ENCODE measurements at regions of chr6 and their contacts with region 1.

Region 1: DNA sequence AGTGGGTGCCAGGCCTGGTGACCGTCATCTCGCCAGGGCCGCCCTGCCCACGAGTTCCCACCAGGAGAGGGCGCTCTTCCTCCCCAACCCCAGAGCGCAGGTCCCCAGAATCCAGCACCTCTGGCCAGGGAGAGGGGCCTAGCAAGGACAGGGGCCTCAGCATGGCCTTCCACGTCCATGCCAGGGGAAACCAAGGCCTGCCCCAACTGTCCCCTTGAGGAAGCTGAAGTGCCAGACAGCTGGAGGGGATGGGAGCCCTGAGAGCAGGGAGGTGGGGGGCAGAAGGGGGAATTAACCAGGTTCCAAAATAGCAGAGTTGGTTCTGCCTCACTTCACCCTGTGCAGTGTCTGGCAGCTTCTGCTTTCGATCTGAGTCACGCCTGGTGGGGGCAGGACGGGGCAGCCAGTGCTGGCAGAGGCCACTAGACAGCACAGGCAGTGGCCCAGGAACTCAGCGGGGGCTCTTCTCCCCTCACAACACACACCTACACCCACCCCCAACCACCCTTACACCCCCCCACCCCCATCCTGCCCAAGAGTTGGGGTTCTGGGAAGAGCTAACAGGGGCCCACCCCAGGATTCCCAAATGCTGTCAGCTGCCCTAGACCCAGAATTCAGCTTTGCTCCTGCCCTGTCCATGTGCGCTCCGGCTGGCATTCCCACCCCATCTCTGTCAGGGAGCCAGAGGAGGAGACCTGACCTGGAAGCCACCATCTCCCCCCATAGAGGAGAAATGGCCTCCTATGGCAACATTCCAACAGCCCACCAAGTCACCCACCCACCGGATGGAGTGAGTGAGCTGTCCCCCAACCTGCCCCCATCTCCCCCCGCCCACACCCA is 29.2 kb downstream of the TFEB start:
- DNase-seq: peak; percentile 67
- H3K4me3 Mint-ChIP-seq: no peak overlapping the region
- H3K27ac Mint-ChIP-seq: peak overlapping the region; percentile 89
- H3K4me1 Mint-ChIP-seq: peaks cover 36% of the 10 kb centered on the region
- H3K27me3 Mint-ChIP-seq: peaks cover 2% of the 10 kb centered on the region

Region 2: DNA sequence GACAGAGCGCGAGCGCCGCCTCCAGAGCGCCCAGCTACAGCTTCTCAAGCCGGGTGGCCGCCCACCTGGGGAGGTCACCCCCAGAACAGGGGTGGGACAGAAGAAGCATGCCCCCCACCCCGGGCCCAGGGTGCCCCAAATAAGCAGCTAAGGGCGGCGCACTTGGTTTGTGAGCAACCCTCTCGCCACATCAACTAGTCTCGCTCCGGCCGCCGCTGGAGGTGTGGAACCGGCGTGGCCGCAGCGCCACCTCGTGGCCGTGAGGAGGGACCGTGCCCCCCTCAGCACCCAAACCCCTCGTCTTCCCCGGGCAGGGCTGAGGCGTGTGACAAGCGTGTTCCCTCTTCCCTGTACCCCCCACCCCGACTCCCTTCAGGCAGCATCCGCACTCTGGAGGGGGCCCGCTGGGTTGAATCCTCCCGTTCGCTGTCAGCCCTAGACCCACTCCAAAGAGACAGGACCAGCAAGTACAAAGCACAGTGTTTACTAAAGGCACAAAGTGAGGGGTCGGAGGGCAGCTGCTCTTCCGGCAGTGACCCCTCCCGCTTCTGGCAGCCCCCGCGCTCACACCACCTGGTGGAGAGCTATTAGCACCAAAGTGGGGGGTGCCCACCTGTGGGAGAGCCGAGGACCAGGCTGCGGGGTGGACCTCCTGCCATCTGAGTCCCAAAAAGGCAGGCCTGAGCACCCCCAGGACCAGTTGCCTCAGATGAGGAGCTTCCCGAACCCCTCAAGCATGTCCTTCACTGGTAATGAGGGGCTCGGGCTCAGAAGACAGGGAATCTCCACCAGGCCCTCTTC is 22.5 kb before region 1 on chr6:
- CTCF ChIA-PET with region 1: interaction called, 17 read pairs
- POLR2A ChIA-PET with region 1: no interaction called
- DNase-seq: peak; percentile 77
- H3K4me3 Mint-ChIP-seq: peak overlapping the region; percentile 40
- H3K27ac Mint-ChIP-seq: peak overlapping the region; percentile 80
- H3K4me1 Mint-ChIP-seq: peaks cover 12% of the 10 kb centered on the region
- H3K27me3 Mint-ChIP-seq: no peaks in the 10 kb centered on the region

Region 3: DNA sequence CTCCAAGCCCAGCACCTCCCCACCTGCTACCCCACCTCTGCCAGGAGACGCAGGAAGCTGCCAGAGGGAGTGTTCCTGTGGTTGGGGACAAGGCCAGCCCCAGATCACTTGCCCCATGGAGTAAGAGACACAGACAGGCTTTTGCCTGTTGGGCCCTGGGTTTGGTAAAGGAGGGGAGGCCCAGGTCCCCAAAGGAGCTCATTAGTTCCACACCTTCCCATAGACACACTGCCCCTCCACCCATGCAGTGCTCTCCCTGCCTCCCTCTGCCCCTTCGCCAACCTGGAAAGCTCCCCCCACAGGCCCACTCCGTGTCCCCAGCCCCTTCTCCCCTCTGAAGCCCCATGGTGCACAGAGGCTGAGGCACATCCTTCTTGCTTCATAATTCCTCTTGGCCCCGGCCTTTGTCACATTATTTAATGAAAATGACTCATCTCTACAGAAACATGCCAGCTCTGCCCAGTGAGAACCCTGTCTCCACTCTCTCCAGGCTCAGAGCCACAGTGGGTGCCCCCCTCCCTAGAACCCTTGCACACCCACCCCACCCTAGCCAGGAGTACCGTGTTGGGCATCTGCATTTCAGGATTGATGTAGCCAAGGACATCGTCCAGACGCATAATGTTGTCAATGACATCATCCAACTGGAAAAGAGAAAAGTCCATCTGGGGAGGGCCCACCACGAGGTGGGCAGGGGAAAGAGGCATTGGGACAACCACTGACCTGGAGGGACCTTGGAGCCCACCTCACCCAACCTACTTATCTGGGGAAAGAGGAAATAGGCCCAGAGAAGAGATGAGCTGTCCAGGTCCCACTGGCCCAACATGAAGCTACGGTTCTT is 16.8 kb before region 1 on chr6:
- CTCF ChIA-PET with region 1: interaction called, 17 read pairs
- POLR2A ChIA-PET with region 1: no interaction called
- DNase-seq: no peak
- H3K4me3 Mint-ChIP-seq: no peak overlapping the region
- H3K27ac Mint-ChIP-seq: no peak overlapping the region
- H3K4me1 Mint-ChIP-seq: peaks cover 3% of the 10 kb centered on the region
- H3K27me3 Mint-ChIP-seq: no peaks in the 10 kb centered on the region

Region 4: GRCh38 chr6:41716516-41717391 is 10.5 kb after region 1 on chr6:
- CTCF ChIA-PET with region 1: interaction called, 13 read pairs
- POLR2A ChIA-PET with region 1: no interaction called
- DNase-seq: no peak
- H3K4me3 Mint-ChIP-seq: no peak overlapping the region
- H3K27ac Mint-ChIP-seq: no peak overlapping the region
- H3K4me1 Mint-ChIP-seq: peaks cover 10% of the 10 kb centered on the region
- H3K27me3 Mint-ChIP-seq: no peaks in the 10 kb centered on the region

Region 5: GRCh38 chr6:41846666-41847237 is 140.5 kb after region 1 on chr6:
- CTCF ChIA-PET with region 1: no interaction called
- POLR2A ChIA-PET with region 1: no interaction called
- DNase-seq: peak; percentile 69
- H3K4me3 Mint-ChIP-seq: no peak overlapping the region
- H3K27ac Mint-ChIP-seq: peak overlapping the region; percentile 16
- H3K4me1 Mint-ChIP-seq: peaks cover 13% of the 10 kb centered on the region
- H3K27me3 Mint-ChIP-seq: no peaks in the 10 kb centered on the region

Region 6: DNA sequence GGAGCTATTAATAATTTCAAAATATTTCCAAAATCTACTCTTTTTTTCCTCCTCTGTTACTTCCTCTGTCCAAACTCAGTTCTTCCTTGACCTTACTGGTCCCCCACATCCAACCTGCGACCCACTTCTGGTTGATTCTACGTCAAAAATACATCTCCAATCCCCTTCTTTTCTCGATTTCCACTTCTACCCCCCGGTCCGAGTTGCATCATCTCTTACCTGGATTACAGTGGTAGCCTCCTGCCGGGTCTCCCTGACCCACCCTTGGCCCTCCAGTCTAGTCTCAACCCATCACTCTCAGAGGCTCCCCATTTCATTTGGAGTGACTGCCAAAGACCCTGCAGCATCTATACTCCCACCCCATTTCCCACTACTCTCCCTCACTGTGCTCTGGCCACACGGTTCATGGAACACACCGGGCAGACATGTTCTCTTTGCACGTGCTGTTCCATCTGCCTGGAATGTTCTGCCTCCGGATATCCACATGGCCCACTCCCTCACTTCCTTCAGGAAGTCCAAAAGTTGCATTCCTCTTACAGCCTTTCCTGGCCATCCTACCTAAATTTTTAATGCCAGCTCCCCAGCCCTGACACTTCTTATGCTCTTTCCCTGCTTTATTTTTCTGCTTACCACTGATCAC is 241.5 kb after region 1 on chr6:
- CTCF ChIA-PET with region 1: no interaction called
- POLR2A ChIA-PET with region 1: no interaction called
- DNase-seq: no peak
- H3K4me3 Mint-ChIP-seq: no peak overlapping the region
- H3K27ac Mint-ChIP-seq: no peak overlapping the region
- H3K4me1 Mint-ChIP-seq: peaks cover 37% of the 10 kb centered on the region
- H3K27me3 Mint-ChIP-seq: no peaks in the 10 kb centered on the region

Measured in activated CD4-positive, alpha-beta T cell treated with anti-CD3 and anti-CD28 coated beads, Interleukin-2, amount 10 ng/mL, durations not matched to agents 7 days and 5 days (primary cell).